Naive thymus-derived CD4-positive, alpha-beta T cell (primary cell): ENCODE measurements at regions of chr6 and their contacts with region 1.

Region 1: GRCh38 chr6:135901774-135902524 is 50.4 kb downstream of the PDE7B start:
- DNase-seq: peak in 7 of 9 donors; percentile 43 to 72 (median 53)
- ATAC-seq: peak; percentile 56
- H3K4me3 ChIP-seq: no peak overlapping the region
- H3K4me3 Mint-ChIP-seq: peak overlapping the region in 7 of 10 donors; percentile 12 to 65 (median 41)
- H3K27ac ChIP-seq: no peak overlapping the region
- H3K27ac Mint-ChIP-seq: peak overlapping the region in 6 of 9 donors; percentile 1 to 78 (median 52)
- H3K4me1 ChIP-seq: peaks cover 0 to 12% of the 10 kb centered on the region in 2 donors
- H3K4me1 Mint-ChIP-seq: peaks cover 0 to 40% (median 31%) of the 10 kb centered on the region in 7 donors
- H3K27me3 ChIP-seq: no peaks in the 10 kb centered on the region
- H3K27me3 Mint-ChIP-seq: no peaks in the 10 kb centered on the region

Region 2: DNA sequence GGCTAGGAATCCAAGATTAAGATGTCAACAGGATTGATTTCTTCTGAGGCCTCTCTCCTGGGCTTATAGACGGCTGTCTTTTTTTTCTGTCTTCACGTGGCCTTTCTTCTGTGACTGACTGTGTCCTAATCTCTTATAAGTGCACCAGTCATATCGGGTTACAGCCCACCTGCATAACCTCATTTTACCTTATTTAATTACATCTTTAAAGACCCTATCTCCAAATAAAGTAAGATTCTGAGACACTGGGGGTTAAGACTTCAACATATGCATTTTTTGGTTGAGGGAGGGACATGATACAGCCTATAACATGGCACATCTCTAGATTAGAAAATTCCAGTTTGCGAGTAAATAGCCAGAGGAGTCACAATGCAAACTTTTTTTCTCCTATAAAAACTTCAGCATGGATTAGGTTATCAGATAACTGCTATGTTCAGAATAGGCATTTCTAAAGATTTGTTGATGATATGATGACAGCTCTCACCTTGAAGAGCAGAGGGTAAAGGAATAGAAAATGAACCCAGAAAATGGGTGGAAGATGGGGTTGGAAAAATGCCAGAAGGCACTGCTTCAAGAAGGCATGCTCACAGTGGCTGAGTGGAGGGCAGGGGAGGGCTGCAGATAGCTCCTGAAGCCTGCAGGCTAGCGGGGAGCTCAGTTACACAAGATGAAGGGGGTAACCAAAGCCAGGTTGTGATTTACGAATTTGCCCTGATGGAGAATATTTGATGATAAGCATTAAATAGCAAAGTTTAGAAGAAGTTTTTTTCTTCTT is 59.1 kb before region 1 on chr6:
- CTCF ChIA-PET with region 1: no interaction called
- POLR2A ChIA-PET with region 1: no interaction called
- intact Hi-C with region 1: no loop called
- DNase-seq: no peak
- ATAC-seq: no peak
- H3K4me3 ChIP-seq: no peak overlapping the region
- H3K4me3 Mint-ChIP-seq: no peak overlapping the region
- H3K27ac ChIP-seq: no peak overlapping the region
- H3K27ac Mint-ChIP-seq: peak overlapping the region in 1 of 9 donors; percentile 13
- H3K4me1 ChIP-seq: no peaks in the 10 kb centered on the region
- H3K4me1 Mint-ChIP-seq: peaks cover 0 to 11% (median 6%) of the 10 kb centered on the region in 7 donors
- H3K27me3 ChIP-seq: no peaks in the 10 kb centered on the region
- H3K27me3 Mint-ChIP-seq: peaks cover 0 to 16% (median 0%) of the 10 kb centered on the region in 5 donors

Region 3: DNA sequence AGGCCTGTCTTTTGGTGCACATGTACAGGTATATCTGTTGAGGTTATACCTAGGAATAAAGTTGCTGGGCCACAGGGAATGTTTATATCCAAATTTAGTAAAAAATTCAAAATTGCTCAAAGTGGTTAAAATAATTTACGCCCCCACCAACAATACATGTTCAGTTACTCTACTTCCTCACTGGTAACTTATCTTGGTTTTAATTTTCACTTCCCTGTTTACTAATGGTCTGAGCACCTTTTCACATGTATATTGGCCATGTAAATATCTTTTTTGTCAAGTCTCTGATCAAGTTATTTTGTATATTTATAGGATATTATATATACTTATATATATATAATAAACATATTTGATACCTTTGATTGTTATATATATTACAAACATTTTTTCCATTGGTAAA is 40.8 kb before region 1 on chr6:
- CTCF ChIA-PET with region 1: interaction called, 3 read pairs
- POLR2A ChIA-PET with region 1: no interaction called
- intact Hi-C with region 1: loop called in 1 of 2 experiments (anchors 2 kb)
- DNase-seq: no peak
- ATAC-seq: no peak
- H3K4me3 ChIP-seq: no peak overlapping the region
- H3K4me3 Mint-ChIP-seq: no peak overlapping the region
- H3K27ac ChIP-seq: no peak overlapping the region
- H3K27ac Mint-ChIP-seq: no peak overlapping the region
- H3K4me1 ChIP-seq: no peaks in the 10 kb centered on the region
- H3K4me1 Mint-ChIP-seq: peaks cover 0 to 22% (median 3%) of the 10 kb centered on the region in 7 donors
- H3K27me3 ChIP-seq: no peaks in the 10 kb centered on the region
- H3K27me3 Mint-ChIP-seq: no peaks in the 10 kb centered on the region